Activated T-helper 2 cell treated with anti-CD3 and anti-CD28 coated beads, Interferon-gamma antibody, Interleukin-2, Interleukin-4, amounts not matched to agents 10 μg/mL and 5 μg/mL and 100 μg/mL, durations not matched to agents 14 hours and 24 hours and 36 hours (primary cell): ENCODE measurements at regions of chr5 and their contacts with region 1.

Region 1: DNA sequence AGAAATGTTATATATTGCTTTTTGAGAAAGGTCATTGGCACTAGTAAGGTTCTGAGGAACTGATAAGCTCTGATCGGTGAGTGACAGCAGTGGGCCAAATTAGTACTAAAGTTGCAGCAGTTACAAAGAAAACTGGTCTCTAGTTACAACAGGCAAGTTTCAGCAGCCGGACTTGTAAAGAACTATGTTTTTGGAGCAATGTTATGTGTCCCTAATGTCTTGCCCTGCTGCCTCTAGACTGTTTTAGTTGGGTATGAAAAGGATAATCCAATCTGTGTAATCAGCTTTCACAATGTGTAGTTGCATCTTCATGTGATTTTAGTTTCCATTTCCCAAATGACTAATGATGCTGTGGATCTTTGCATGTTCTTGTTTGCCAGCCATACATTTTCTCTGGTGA is 113.5 kb downstream of the CAMK4 start:
- DNase-seq: no peak
- H3K4me3 Mint-ChIP-seq: no peak overlapping the region
- H3K27ac Mint-ChIP-seq: peak overlapping the region; percentile 77
- H3K4me1 Mint-ChIP-seq: peaks cover 40% of the 10 kb centered on the region
- H3K27me3 Mint-ChIP-seq: no peaks in the 10 kb centered on the region

Region 2: GRCh38 chr5:111254613-111255012 is 83.1 kb before region 1 on chr5:
- intact Hi-C with region 1: loop called (anchors 1 kb)
- DNase-seq: peak; percentile 41
- H3K4me3 Mint-ChIP-seq: peak overlapping the region; percentile 35
- H3K27ac Mint-ChIP-seq: peak overlapping the region; percentile 97
- H3K4me1 Mint-ChIP-seq: peaks cover 70% of the 10 kb centered on the region
- H3K27me3 Mint-ChIP-seq: no peaks in the 10 kb centered on the region

Region 3: GRCh38 chr5:111299831-111300432 is 37.8 kb before region 1 on chr5:
- intact Hi-C with region 1: loop called (anchors 5 kb)
- DNase-seq: no peak
- H3K4me3 Mint-ChIP-seq: no peak overlapping the region
- H3K27ac Mint-ChIP-seq: peak overlapping the region; percentile 40
- H3K4me1 Mint-ChIP-seq: peaks cover 8% of the 10 kb centered on the region
- H3K27me3 Mint-ChIP-seq: no peaks in the 10 kb centered on the region

Region 4: GRCh38 chr5:111313017-111313724 is 24.5 kb before region 1 on chr5:
- intact Hi-C with region 1: loop called (anchors 1 kb)
- DNase-seq: no peak
- H3K4me3 Mint-ChIP-seq: no peak overlapping the region
- H3K27ac Mint-ChIP-seq: peak overlapping the region; percentile 80
- H3K4me1 Mint-ChIP-seq: peaks cover 52% of the 10 kb centered on the region
- H3K27me3 Mint-ChIP-seq: no peaks in the 10 kb centered on the region

Region 5: DNA sequence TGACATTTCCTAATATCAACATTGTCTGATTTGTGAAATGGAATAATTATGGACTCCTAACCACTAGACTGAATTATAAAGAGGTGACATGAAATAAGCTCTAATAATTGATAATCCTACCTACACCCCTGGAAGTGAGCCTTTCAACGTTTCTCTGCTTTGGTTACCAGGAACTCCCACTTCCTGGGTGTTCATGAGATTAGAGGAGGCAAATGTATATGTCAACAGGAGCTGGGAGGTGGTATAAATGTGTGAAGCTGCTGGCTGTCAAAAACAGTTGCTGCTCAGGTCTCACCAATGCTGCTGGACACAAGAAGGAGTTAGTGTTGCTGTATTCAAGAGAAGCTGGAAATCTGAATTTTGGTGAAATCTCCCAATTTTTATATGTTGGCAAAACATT is 16.7 kb before region 1 on chr5:
- intact Hi-C with region 1: loop called (anchors 1 kb)
- DNase-seq: no peak
- H3K4me3 Mint-ChIP-seq: no peak overlapping the region
- H3K27ac Mint-ChIP-seq: peak overlapping the region; percentile 10
- H3K4me1 Mint-ChIP-seq: peaks cover 45% of the 10 kb centered on the region
- H3K27me3 Mint-ChIP-seq: no peaks in the 10 kb centered on the region

Region 6: GRCh38 chr5:112036206-112036605 is 698.5 kb after region 1 on chr5:
- intact Hi-C with region 1: no loop called
- DNase-seq: no peak
- H3K4me3 Mint-ChIP-seq: no peak overlapping the region
- H3K27ac Mint-ChIP-seq: no peak overlapping the region
- H3K4me1 Mint-ChIP-seq: no peaks in the 10 kb centered on the region
- H3K27me3 Mint-ChIP-seq: no peaks in the 10 kb centered on the region